Heart left ventricle (tissue), 16 donors: ENCODE measurements at regions of chr1 and their contacts with region 1.

Region 1: DNA sequence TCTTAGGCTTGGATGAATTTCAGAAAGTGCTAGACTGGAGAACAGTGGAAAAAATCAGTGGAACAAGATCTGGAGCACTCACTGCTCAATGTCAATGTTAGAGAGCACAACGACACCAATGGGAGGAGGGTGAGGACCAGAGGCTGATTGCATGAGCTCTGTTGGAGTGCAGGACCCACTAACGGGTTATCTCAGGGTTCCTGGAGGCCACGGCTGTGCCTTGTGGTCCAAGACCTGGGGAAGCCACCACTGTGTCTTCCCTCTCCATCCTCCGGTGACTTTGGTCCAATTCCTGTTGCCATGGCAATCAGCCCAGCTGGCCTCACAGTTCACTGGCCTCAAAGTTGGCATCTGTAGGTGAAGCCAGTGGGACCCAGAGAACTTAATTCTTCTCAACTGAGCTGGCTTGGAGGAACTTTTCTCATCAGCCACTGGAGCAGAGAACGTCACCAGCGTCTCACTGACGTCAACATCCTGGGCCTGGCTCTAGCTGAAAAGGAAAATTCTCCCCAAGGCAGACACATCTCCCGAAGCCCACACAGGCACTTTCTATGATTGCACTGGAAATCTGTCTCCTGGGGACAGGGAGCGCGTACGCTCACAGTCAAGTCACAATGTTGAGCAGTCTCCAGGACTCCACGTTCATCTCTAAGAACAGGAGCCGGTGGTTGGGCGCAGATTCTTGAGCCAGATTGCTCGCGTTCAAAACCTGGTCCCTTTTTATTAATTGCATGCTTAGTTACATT is 21.9 kb upstream of the GPR157 start:
- DNase-seq: peak in 4 of 5 donors; percentile 64 to 79 (median 74)
- ATAC-seq: peak; percentile 59 to 79 (median 66)
- H3K4me3 ChIP-seq: peak overlapping the region in 4 of 12 donors; percentile 3 to 19 (median 13)
- H3K27ac ChIP-seq: peak overlapping the region; percentile 43 to 98 (median 80)
- H3K4me1 ChIP-seq: peaks cover 0 to 46% (median 22%) of the 10 kb centered on the region in 12 donors
- H3K27me3 ChIP-seq: no peaks in the 10 kb centered on the region
- CTCF ChIP-seq: no peak
- POLR2A ChIP-seq: no peak

Region 2: GRCh38 chr1:9161963-9162362 is 11.2 kb after region 1 on chr1:
- intact Hi-C with region 1: loop called in 1 of 10 experiments (anchors 1 kb)
- DNase-seq: no peak
- ATAC-seq: no peak
- H3K4me3 ChIP-seq: no peak overlapping the region
- H3K27ac ChIP-seq: peak overlapping the region in 3 of 12 donors; percentile 15 to 83 (median 83)
- H3K4me1 ChIP-seq: peaks cover 0 to 42% (median 29%) of the 10 kb centered on the region in 12 donors
- H3K27me3 ChIP-seq: no peaks in the 10 kb centered on the region
- CTCF ChIP-seq: no peak
- POLR2A ChIP-seq: no peak

Region 3: DNA sequence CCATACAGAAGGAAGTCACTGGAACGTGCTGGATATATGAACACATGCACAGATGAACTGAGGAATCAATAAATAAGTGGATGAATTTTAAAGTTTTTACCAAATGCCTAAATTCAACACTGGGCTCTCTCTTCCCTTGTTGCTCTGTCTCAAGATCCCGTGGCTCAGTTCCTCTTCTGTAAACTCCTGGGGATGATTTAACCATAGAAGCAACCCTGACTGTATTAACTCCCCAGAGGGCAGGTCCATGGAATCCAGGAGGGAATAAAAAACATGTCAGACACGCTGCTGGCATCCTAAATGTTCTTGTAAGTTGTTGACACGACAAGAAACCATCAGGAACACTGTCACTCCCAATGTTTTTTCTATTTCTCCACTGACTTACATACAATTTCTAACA is 23.5 kb after region 1 on chr1:
- intact Hi-C with region 1: no loop called
- DNase-seq: no peak
- ATAC-seq: no peak
- H3K4me3 ChIP-seq: no peak overlapping the region
- H3K27ac ChIP-seq: peak overlapping the region in 1 of 12 donors; percentile 76
- H3K4me1 ChIP-seq: peaks cover 0 to 26% (median 0%) of the 10 kb centered on the region in 12 donors
- H3K27me3 ChIP-seq: no peaks in the 10 kb centered on the region
- CTCF ChIP-seq: no peak
- POLR2A ChIP-seq: no peak